Endothelial cell of umbilical vein (primary cell): ENCODE measurements at regions of chr17 and their contacts with region 1.

Region 1: DNA sequence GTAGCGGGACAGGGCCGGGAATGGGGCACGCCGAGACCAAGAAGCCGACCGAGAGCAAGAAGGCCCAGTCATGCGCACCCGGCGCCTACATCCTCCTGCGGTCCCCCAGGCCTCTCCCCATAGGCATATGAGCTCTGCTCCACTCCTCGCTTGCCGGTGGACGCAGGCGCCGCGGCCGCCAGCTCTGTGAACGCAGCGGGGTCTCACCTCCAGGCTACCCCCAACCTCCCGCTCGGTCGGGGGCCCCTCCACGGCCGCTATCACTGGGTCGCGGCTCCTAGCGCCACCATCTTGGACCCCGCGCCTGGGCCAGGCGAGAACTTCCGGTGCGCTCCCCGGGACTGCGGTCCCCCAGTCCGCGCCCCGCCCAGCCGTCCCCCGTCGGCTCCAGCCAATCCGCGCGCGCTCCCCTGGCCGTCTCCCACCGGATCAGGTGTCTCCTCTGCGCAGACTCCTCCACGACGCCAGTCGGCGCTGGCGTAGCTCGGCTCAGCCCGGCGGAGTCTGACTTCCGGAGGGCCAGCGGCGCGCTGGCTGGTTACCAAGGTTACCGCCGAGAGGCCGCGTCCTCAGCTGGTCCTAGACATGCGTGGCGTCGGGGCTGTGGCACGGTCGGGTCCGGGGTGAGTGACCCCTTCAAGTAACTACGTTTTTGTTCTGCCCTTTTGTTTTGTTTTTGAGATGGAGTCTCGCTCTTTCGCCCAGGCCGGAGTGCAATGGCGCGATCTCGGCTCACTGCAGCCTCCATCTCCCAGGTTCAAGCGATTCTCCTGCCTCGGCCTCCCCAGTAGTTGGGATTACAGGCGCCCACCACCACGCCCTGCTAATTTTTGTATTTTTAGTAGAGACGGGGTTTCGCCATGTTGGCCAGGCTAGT is at the start of gene ZNF594:
- DNase-seq: peak; percentile 93
- H3K4me3 ChIP-seq: peak within 1 kb of the TSS; percentile 42 to 77 (median 76)
- H3K27ac ChIP-seq: peak within 1 kb of the TSS; percentile 42
- H3K4me1 ChIP-seq: peaks cover 3% of the 10 kb centered on the region
- H3K27me3 ChIP-seq: no peaks in the 10 kb centered on the region
- CTCF ChIP-seq: peak; percentile 74 to 86
- POLR2A ChIP-seq: peak; percentile 85
- total RNA-seq, gene ZNF594: 5.0 and 5.8 TPM in 2 replicates

Region 2: DNA sequence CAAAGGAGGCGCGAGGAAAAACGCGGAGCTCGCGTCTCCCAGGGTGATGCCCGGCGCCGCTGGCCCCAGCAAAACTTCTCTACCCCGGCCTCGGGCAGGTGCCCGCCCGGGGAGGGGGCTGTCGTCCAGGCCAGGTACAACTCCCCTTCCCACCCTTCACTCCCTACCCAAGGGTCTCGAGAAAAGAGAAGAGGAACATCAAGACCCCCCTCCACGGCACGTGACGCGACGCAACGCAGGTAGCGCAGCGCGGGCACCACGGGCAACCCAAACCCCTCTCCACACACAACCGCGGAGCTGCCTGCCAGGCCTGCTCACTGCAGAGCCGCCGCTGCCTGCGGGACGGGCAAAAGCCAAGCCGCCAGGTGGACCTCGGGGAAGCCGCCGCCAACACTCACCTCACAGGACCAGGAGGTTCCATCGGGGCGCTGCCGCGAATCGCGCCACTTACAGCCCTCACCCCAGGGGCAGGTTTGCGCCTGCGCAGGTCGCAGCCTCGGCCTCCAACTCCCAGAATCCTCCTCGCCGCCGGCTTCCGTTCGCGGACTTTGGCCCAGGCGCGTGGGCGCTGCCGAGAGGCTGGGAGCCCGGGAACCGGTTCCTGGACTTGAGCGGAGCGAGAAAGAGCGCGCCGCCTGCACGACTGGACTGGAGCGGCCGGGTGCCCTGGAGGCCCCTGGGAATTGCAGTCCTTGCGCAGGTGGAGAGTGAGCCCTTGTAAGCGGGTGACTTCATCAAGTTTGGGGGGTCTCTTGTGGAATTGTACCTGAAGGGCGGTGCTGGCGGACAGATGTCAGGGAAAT is 80.2 kb before region 1 on chr17 and contains the start of gene ZNF232:
- CTCF ChIA-PET with region 1: no interaction called
- POLR2A ChIA-PET with region 1: no interaction called
- dilution Hi-C with region 1: no loop called
- intact Hi-C with region 1: loop called (anchors 5 kb)
- DNase-seq: peak; percentile 94
- H3K4me3 ChIP-seq: peak within 1 kb of the TSS; percentile 58 to 90 (median 82)
- H3K27ac ChIP-seq: peak within 1 kb of the TSS; percentile 38
- H3K4me1 ChIP-seq: peaks cover 8% of the 10 kb centered on the region
- H3K27me3 ChIP-seq: peaks cover 10 to 17% of the 10 kb centered on the region in 2 experiments
- CTCF ChIP-seq: no peak
- POLR2A ChIP-seq: peak; percentile 80
- total RNA-seq, gene ZNF232: 9.9 and 10.1 TPM in 2 replicates

Region 3: GRCh38 chr17:5237541-5238016 is 45.8 kb after region 1 on chr17:
- CTCF ChIA-PET with region 1: interaction called, 30 read pairs
- POLR2A ChIA-PET with region 1: no interaction called
- dilution Hi-C with region 1: no loop called
- intact Hi-C with region 1: no loop called
- DNase-seq: peak; percentile 64
- H3K4me3 ChIP-seq: no peak overlapping the region
- H3K27ac ChIP-seq: no peak overlapping the region
- H3K4me1 ChIP-seq: no peaks in the 10 kb centered on the region
- H3K27me3 ChIP-seq: no peaks in the 10 kb centered on the region
- CTCF ChIP-seq: peak; percentile 76 to 77
- POLR2A ChIP-seq: no peak

Region 4: DNA sequence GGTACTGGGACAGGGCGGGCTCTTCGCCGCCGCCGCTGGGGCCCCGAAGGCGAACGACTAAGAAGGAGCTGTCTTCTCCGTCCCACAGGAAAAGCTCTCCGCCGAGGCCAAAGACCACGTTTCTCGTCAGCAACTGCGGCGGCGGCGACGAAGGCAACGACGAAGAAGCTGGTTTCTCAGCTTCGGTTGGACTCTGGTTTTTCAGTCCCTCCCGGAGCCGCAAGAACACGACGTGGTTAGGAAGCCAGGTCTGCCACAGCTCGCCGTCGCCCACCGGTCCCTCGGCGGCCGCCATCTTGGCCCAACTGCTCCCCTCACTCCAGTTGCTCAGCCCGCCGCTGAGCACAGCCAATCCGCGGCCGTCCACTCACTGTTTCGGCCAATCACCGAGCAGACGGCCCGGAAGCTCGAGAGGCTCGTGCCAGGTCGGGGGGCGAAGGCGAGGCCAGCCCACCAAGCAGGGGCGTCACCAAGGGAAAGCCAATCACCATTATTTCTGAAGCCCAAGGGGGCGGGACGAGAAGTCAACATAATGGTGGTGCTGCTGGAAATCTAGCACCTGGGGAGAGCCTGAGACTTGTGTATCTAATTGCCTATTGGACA is 227.7 kb after region 1 on chr17 and contains the start of gene NUP88:
- CTCF ChIA-PET with region 1: no interaction called
- POLR2A ChIA-PET with region 1: no interaction called
- dilution Hi-C with region 1: no loop called
- intact Hi-C with region 1: no loop called
- DNase-seq: peak; percentile 99
- H3K4me3 ChIP-seq: peak within 1 kb of the TSS; percentile 75 to 94 (median 89)
- H3K27ac ChIP-seq: peak within 1 kb of the TSS; percentile 79
- H3K4me1 ChIP-seq: peaks cover 13% of the 10 kb centered on the region
- H3K27me3 ChIP-seq: no peaks in the 10 kb centered on the region
- CTCF ChIP-seq: no peak
- POLR2A ChIP-seq: peak; percentile 49
- total RNA-seq, gene NUP88: 87.4 and 95.8 TPM in 2 replicates